HEK293 (cell line): ENCODE measurements at regions of chr18 and their contacts with region 1.

Region 1: GRCh38 chr18:50194631-50195532 is at the start of gene MYO5B:
- H3K4me3 ChIP-seq: peak within 1 kb of the TSS; percentile 66
- H3K27ac ChIP-seq: peak within 1 kb of the TSS; percentile 56; the same call in 1 of the 2 replicates
- H3K4me1 ChIP-seq: no peaks in the 10 kb centered on the region
- CTCF ChIP-seq: no peak

Region 2: GRCh38 chr18:49863769-49864630 is 330.9 kb before region 1 on chr18:
- CTCF ChIA-PET with region 1: interaction called, 13 read pairs
- POLR2A ChIA-PET with region 1: no interaction called
- H3K4me3 ChIP-seq: peak overlapping the region; percentile 14; the same call in 1 of the 2 replicates
- H3K27ac ChIP-seq: no peak overlapping the region; the same call in 1 of the 2 replicates
- H3K4me1 ChIP-seq: no peaks in the 10 kb centered on the region
- CTCF ChIP-seq: peak; percentile 71

Region 3: GRCh38 chr18:50051288-50051687 is 143.6 kb before region 1 on chr18:
- CTCF ChIA-PET with region 1: interaction called, 14 read pairs
- POLR2A ChIA-PET with region 1: no interaction called
- H3K4me3 ChIP-seq: no peak overlapping the region
- H3K27ac ChIP-seq: no peak overlapping the region
- H3K4me1 ChIP-seq: no peaks in the 10 kb centered on the region
- CTCF ChIP-seq: 0 out of 2 replicates have a peak, but pooled peaks have one; percentile 40

Region 4: DNA sequence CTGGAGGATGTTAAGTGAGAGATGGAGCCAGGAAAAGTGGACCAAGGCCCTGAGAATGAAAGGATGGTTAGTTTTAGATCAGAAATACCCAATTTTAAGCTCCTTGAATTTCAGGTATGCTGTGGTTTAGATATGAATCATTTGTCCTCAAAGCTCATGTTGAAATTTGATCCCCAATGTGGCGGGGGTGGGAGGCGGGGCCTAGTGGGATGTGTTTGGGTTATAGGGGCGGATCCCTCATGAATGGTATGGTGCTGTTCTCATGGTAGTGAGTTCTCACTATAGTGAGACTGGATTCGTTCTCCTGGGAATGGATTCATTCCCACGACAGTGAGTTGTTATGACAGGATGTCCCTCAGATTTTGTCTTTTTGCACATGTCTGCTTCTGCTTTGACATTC is 11.3 kb before region 1 on chr18:
- CTCF ChIA-PET with region 1: interaction called, 10 read pairs
- POLR2A ChIA-PET with region 1: interaction called, 4 read pairs
- H3K4me3 ChIP-seq: no peak overlapping the region
- H3K27ac ChIP-seq: no peak overlapping the region
- H3K4me1 ChIP-seq: peaks cover 12% of the 10 kb centered on the region; the same call in 1 of the 2 replicates
- CTCF ChIP-seq: no peak

Region 5: DNA sequence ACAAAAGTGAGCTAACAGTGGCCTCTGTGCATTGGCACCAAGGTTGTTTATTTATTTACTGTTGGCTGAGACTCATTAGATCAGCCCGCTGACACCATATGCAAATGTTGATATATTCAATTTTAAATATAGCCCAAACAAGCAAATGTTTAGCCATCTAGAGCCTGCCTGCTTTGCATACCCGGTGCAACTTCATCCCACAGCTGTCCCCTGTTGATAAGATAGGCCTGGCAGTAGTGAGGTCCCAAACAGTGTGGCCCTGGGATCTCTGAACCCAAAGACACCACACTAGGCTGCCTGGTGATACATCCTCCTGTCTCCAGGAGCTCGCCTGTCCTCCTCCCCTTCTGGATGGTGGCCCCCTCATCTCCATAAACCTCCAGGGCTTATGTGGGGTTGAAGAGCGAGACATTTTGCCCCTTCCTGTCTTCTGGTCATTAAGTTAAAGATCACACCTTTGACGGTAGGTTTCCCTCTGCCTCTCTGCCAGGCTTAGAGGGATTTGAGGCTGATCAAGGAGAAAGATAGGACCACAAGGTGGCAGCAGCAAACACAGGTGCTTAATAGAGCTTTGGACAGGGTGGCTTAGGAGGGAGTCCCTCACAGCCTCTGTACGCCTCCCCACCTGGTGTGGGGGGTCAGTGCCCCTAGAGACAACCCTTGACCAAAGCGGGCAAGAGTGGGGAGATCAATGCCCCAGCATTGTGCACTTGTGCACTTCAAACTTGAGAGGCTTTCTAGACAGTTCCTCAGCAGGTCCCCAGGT is 23.7 kb after region 1 on chr18:
- CTCF ChIA-PET with region 1: no interaction called
- POLR2A ChIA-PET with region 1: no interaction called
- H3K4me3 ChIP-seq: no peak overlapping the region
- H3K27ac ChIP-seq: no peak overlapping the region
- H3K4me1 ChIP-seq: no peaks in the 10 kb centered on the region
- CTCF ChIP-seq: peak; percentile 63; the same call in 1 of the 2 replicates

Region 6: GRCh38 chr18:51120809-51121596 is 926.1 kb after region 1 on chr18:
- CTCF ChIA-PET with region 1: no interaction called
- POLR2A ChIA-PET with region 1: no interaction called
- H3K4me3 ChIP-seq: no peak overlapping the region
- H3K27ac ChIP-seq: no peak overlapping the region
- H3K4me1 ChIP-seq: no peaks in the 10 kb centered on the region
- CTCF ChIP-seq: no peak